ENCODE measurements at regions of chrX and their contacts with region 1.

Region 1: DNA sequence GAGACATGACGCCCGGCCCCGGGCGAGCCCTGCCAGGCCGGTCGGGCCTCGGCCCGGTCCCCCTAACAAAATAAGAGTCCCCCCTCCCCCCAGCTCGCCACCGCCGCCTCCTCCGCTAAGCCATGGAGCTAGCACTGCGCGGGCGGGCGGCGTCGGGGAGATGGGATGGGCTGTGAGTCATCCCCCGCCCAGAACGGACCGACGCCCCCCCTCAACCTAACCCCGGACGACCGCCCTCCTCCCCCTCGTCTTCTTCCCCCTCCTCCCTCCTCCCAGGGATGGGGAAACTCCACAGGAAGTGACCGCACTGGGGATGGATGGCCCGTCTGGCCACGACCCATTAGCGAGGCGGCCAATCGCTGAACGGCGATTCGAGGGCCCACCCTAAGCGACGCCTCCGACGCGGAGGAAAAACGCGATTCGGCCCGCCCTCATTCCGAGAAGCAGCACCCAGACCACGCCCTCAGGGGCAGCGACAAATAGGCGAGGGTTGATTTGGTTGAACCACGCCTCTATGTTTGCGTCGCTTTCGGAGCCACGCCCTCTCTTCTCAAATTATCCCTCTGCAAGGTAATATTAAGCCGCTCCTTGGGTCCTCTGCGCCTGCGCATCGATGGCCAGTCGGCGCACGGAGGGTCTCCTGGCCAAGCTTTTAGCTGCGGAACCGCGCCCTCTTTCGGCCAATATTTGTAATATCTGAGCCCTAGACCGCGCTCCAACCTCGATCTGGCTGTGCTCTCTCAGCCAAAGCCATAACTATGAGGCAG is at the start of gene TFE3:
- DNase-seq: peak; percentile 97
- ATAC-seq: peak; percentile 93
- H3K4me3 Mint-ChIP-seq: peak within 1 kb of the TSS; percentile 87
- H3K27ac Mint-ChIP-seq: peak within 1 kb of the TSS; percentile 87
- H3K4me1 Mint-ChIP-seq: peaks cover 36% of the 10 kb centered on the region
- H3K27me3 Mint-ChIP-seq: no peaks in the 10 kb centered on the region
- total RNA-seq, gene TFE3: 17.6 to 18.2 TPM

Region 2: DNA sequence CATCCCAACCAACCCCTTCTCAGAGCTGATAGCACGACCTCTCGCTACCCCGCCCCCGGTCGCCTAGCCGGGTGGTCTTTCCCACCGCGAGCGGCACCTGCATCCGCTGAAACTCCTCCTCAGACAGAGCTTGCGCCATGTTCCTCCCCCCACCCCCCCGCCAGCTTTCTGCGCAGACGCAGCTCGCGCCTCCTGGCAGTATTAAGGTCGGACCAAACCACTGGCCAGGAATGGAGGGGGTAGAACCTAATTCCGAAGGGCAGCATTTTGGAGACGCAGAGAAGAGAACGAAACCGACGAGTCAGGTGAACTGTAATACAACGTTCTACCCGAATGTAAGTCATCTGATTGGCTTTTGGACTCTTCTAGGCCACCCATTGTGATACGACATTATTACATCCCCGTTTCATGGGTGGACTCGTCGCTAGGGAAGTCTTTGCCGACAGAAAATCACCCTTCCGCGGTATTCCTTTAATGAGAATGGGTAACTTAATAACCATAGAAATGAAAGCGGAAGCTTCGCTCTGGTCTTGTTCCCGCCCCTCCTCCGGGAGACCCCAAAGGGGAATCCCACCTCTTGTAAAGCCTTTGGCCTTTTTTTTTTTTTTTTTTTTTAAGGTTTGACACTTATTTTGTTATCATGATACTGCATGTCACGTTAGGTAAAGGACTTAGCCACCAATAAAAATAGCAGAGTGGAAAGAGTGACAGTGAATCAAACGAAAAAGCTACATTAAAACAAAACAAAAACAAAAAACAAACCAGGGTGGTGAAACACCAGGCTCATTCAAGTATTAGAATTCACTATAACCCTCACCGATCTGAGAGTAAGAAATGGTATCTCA is 41.1 kb before region 1 on chrX and contains the start of gene GRIPAP1:
- CTCF ChIA-PET with region 1: interaction called, 5 read pairs
- POLR2A ChIA-PET with region 1: interaction called, 10 read pairs
- DNase-seq: peak; percentile 83
- ATAC-seq: peak; percentile 81
- H3K4me3 Mint-ChIP-seq: peak within 1 kb of the TSS; percentile 94
- H3K27ac Mint-ChIP-seq: peak within 1 kb of the TSS; percentile 97
- H3K4me1 Mint-ChIP-seq: peaks cover 30% of the 10 kb centered on the region
- H3K27me3 Mint-ChIP-seq: no peaks in the 10 kb centered on the region
- total RNA-seq, gene GRIPAP1: 81.8 to 82.7 TPM

Measured in activated CD8-positive, alpha-beta T cell treated with anti-CD3 and anti-CD28 coated beads, Interleukin-2, amount 10 ng/mL, durations not matched to agents 7 days and 5 days (primary cell).